ENCODE measurements at regions of chr19 and their contacts with region 1.

Region 1: DNA sequence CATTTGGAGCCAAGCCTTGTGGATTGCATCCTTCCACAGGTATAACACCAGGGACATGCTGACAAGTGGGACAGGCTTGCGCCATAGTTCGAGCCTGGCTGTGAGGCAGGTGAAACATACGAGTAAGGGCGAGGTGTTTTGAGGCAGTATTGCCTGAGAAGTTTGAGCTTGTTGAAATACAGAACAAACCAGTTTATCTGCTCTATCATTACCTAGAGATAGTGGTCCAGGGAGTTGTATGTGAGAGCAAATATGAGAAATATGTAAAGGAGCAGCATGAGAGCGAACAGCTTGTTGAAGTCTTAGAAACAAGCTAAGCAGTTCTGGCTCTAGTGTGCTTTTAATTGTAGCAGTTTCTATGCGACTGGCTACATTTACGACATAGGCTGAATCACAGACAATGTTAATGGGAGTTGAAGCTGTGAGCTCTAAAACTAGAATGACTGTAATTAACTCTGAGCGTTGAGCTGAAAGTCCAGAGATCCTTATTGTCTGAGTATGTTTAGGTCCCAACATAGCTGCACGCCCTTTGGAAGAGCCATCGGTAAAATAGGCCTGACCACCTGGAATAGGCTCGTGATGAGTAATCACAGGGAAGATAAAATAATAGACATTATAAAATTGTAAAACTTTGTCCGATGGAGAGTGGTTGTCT is 8.2 kb downstream of the ZNF439 start:
- DNase-seq: no peak
- ATAC-seq: no peak
- H3K4me3 ChIP-seq: no peak overlapping the region
- H3K27ac ChIP-seq: no peak overlapping the region
- H3K4me1 ChIP-seq: no peaks in the 10 kb centered on the region
- H3K27me3 ChIP-seq: peaks cover 5 to 17% of the 10 kb centered on the region in 2 experiments
- CTCF ChIP-seq: no peak
- EP300 ChIP-seq: no peak
- POLR2A ChIP-seq: no peak
- RAD21 ChIP-seq: no peak

Region 2: GRCh38 chr19:11496391-11497163 is 360.1 kb before region 1 on chr19:
- CTCF ChIA-PET with region 1: no interaction called
- POLR2A ChIA-PET with region 1: no interaction called
- in situ Hi-C with region 1: no loop called
- intact Hi-C with region 1: no loop called
- DNase-seq: peak; percentile 84 to 93 (median 88)
- ATAC-seq: peak; percentile 99
- H3K4me3 ChIP-seq: no peak overlapping the region
- H3K27ac ChIP-seq: peak overlapping the region; percentile 39; the same call in 2 of the 3 replicates
- H3K4me1 ChIP-seq: peaks cover 15 to 42% of the 10 kb centered on the region in 2 experiments
- H3K27me3 ChIP-seq: no peaks in the 10 kb centered on the region
- CTCF ChIP-seq: peak; percentile 91 to 94 (median 92)
- EP300 ChIP-seq: no peak; the same call in 1 of the 2 replicates
- POLR2A ChIP-seq: no peak
- RAD21 ChIP-seq: peak; percentile 72 to 88

Region 3: GRCh38 chr19:11798391-11799330 is 58.1 kb before region 1 on chr19 and contains the start of gene ZNF491:
- CTCF ChIA-PET with region 1: interaction called, 3 read pairs
- POLR2A ChIA-PET with region 1: no interaction called
- in situ Hi-C with region 1: no loop called
- intact Hi-C with region 1: loop called (anchors 10 kb)
- DNase-seq: peak; percentile 79 to 88 (median 81)
- ATAC-seq: peak; percentile 99
- H3K4me3 ChIP-seq: peak within 1 kb of the TSS; percentile 48
- H3K27ac ChIP-seq: no peak within 1 kb of the TSS
- H3K4me1 ChIP-seq: peaks cover 3 to 17% of the 10 kb centered on the region in 2 experiments; a peak in 4 of 5 replicates
- H3K27me3 ChIP-seq: no peaks in the 10 kb centered on the region
- CTCF ChIP-seq: peak in 2 of 3 experiments; percentile 12 to 29; a peak in 2 of 6 replicates
- EP300 ChIP-seq: no peak
- POLR2A ChIP-seq: no peak
- RAD21 ChIP-seq: no peak
- polyA plus RNA-seq, gene ZNF491: 0.24 TPM in 1 of 2 experiments, not detected in the other

Measured in K562 (cell line).